ENCODE measurements at regions of chr17 and their contacts with region 1.

Region 1: DNA sequence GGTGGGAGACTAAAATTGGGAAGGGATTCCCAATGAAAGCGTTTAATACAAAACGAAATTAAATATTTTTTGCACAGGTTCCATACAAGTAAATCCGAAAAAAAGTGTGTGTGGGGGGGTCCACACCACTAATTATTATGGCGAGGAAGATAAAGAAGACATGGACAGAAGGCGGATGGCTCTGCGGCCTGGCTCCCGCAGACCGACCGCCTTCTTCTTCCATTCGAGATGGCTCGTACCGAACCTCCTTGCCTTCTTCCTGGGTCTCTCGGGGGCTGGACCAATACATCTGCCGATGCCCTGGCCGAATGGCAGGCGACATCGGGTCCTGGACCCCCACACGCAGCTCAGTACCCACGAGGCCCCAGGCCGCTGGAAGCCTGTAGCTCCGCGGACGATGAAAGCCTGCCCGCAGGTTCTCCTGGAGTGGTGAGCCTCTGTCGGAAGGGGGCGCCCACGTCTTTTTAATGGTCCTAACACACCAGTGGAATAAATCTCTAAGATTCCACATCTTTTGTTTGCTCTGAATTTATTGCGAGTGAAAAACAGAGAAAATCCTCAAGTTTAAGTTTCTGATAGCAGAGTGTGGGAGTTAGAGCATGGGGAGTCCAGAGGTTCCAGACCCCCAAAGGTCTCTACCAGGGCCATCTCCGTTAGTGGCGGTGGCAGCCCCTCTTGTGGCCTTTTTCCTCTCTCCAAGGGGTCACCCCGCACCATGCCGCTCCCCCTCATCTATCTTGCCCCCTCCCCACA is 1.4 kb downstream of the PRAC2 start:
- DNase-seq: peak; percentile 94
- H3K4me3 Mint-ChIP-seq: peak overlapping the region; percentile 57
- H3K27ac Mint-ChIP-seq: no peak overlapping the region
- H3K4me1 Mint-ChIP-seq: peaks cover 43% of the 10 kb centered on the region
- H3K27me3 Mint-ChIP-seq: peaks cover 92% of the 10 kb centered on the region

Region 2: GRCh38 chr17:48610282-48611211 is 113.9 kb before region 1 on chr17 and contains the start of gene HOXB7:
- CTCF ChIA-PET with region 1: interaction called, 7 read pairs
- intact Hi-C with region 1: loop called (anchors 5 kb)
- DNase-seq: peak; percentile 77
- H3K4me3 Mint-ChIP-seq: peak within 1 kb of the TSS; percentile 89
- H3K27ac Mint-ChIP-seq: no peak within 1 kb of the TSS
- H3K4me1 Mint-ChIP-seq: peaks cover 33% of the 10 kb centered on the region
- H3K27me3 Mint-ChIP-seq: peaks cover 71% of the 10 kb centered on the region
- total RNA-seq, gene HOXB7: 0.29 TPM in 1 of 2 experiments, not detected in the other

Region 3: GRCh38 chr17:48678141-48678971 is 46.1 kb before region 1 on chr17:
- CTCF ChIA-PET with region 1: interaction called, 50 read pairs
- intact Hi-C with region 1: loop called (anchors 2 kb)
- DNase-seq: peak; percentile 74
- H3K4me3 Mint-ChIP-seq: no peak overlapping the region
- H3K27ac Mint-ChIP-seq: no peak overlapping the region
- H3K4me1 Mint-ChIP-seq: peaks cover 4% of the 10 kb centered on the region
- H3K27me3 Mint-ChIP-seq: peaks cover 20% of the 10 kb centered on the region

Region 4: GRCh38 chr17:48747445-48748363 is 23.3 kb after region 1 on chr17:
- CTCF ChIA-PET with region 1: interaction called, 18 read pairs
- intact Hi-C with region 1: loop called (anchors 2 kb)
- DNase-seq: no peak
- H3K4me3 Mint-ChIP-seq: no peak overlapping the region
- H3K27ac Mint-ChIP-seq: no peak overlapping the region
- H3K4me1 Mint-ChIP-seq: peaks cover 9% of the 10 kb centered on the region
- H3K27me3 Mint-ChIP-seq: peaks cover 84% of the 10 kb centered on the region

Region 5: DNA sequence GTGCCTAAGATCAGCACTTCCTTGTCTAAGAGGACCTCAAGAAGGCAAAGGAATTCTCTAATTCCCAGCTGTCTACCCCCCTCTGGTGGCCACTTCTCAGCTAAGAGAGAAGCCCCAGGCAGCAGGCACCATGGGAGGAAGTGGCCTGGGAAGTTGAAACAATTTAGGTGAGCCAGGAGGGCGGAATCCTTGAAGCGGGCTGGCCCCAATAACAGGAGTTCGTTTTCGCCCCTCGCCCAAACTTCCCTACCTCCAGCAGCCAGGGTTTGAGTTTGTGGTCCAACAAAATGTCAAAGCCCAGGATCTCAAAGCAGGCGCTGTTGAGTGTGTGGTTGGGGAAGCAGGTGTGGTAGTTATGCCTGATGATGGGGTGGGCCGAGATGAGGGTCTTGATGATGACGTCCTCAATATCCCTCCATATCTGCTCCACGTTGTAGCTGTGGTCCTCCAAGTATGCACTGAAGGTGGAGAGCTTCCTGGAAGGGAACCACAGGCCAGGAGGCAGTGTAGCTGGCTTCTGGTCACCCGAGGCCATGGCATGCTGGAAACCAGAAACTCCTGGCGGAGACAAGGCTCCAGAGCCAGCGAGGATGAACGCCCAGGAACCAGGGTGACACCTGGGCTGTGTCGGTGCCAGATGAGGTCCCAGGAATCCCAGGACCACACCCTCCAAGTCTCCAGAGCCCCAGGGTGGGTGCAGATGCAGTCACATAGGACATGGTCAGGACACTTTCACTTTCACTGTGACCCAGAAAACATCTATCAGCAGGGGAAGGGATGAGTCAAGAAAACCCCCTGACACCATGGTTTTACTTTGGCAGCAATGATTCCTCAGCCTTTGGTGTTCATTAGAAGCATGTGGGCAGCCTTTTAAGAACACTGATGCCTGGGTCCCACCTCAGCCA is 67.0 kb after region 1 on chr17:
- CTCF ChIA-PET with region 1: interaction called, 64 read pairs
- intact Hi-C with region 1: loop called (anchors 1 kb)
- DNase-seq: peak; percentile 59
- H3K4me3 Mint-ChIP-seq: no peak overlapping the region
- H3K27ac Mint-ChIP-seq: no peak overlapping the region
- H3K4me1 Mint-ChIP-seq: no peaks in the 10 kb centered on the region
- H3K27me3 Mint-ChIP-seq: peaks cover 20% of the 10 kb centered on the region

Region 6: GRCh38 chr17:48997083-48997826 is 272.8 kb after region 1 on chr17 and contains the start of gene IGF2BP1:
- CTCF ChIA-PET with region 1: interaction called, 3 read pairs
- intact Hi-C with region 1: loop called (anchors 10 kb)
- DNase-seq: peak; percentile 29
- H3K4me3 Mint-ChIP-seq: peak within 1 kb of the TSS; percentile 65
- H3K27ac Mint-ChIP-seq: no peak within 1 kb of the TSS
- H3K4me1 Mint-ChIP-seq: peaks cover 29% of the 10 kb centered on the region
- H3K27me3 Mint-ChIP-seq: peaks cover 68% of the 10 kb centered on the region
- total RNA-seq, gene IGF2BP1: 0.57 to 0.60 TPM